Right cardiac atrium (tissue), 5 donors: ENCODE measurements at regions of chr14 and their contacts with region 1.

Region 1: DNA sequence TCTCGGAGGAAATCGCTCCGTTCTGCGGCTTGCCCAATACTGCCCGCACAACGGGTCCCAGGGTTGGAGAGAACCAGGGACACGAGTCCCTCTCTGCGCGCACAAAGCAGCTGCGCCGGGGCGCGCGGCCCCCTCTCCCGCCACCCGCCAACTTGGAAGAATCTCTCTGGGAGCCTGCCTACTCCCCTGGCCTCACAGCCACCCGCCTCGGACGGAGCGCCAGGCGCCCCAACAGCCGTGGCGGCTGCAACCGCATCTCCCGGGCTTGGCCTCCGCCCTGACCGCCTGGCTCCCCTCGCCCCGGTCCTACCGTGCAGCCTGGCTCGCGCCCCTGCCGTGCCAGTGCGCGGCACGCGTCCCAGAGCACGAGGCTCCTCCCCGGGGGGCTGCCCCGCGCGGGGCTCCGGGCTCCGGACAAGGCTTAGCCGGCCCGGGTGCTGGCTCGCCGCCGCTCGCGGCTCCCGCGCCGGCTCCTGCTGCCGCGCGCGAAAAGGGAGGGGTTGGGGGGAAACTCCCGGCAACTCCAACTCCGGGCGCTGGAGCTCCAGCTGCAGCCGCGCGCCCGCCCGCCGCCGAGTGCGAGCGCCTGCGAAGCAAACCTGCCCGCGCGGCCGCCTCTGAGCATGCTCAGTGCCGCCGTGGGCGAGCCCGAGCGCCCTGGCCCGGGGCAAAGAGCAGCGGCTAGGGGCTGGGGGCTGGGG is at the start of gene STXBP6:
- DNase-seq: peak; percentile 76 to 92 (median 92)
- ATAC-seq: peak; percentile 87 to 93
- H3K4me3 ChIP-seq: peak within 1 kb of the TSS; percentile 74
- H3K27ac ChIP-seq: peak within 1 kb of the TSS; percentile 84
- H3K4me1 ChIP-seq: peaks cover 2% of the 10 kb centered on the region
- H3K27me3 ChIP-seq: no peaks in the 10 kb centered on the region
- total RNA-seq, gene STXBP6: 18.8 to 31.7 (median 30.7) TPM

Region 2: DNA sequence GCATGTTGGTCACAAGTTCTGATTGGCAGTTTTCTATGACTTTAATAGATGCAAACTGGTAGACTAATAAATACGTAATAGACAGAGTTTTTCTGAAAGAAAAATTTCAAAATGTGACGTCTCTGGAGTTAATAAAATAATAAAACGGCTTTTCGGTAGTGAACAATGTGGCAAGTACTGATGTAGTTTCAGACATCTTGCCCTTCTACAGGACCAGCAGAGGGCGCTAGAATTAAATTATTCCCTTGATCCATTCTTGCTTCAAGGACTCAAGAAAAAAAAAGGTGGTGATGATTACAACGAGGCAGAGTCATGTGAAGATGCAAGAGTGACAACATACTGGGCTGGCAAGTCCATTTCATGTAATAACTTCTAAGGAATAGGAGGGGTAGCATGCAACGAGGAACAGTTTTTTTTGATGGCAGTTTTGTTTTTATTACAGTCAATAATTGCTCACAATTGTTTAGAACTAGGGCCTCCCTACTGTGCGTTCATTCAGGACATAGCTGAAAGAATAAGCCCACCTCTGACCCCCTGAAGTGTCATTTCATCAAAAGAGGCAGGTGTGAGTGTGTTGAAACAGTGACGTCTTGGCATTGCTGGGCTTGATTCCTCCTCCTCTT is 314.7 kb before region 1 on chr14:
- intact Hi-C with region 1: loop called in 1 of 4 experiments (anchors 10 kb)
- DNase-seq: peak in 1 of 3 donors; percentile 19
- ATAC-seq: peak; percentile 69 to 73
- H3K4me3 ChIP-seq: no peak overlapping the region
- H3K27ac ChIP-seq: no peak overlapping the region
- H3K4me1 ChIP-seq: no peaks in the 10 kb centered on the region
- H3K27me3 ChIP-seq: no peaks in the 10 kb centered on the region

Region 3: GRCh38 chr14:24806061-24806678 is 243.5 kb before region 1 on chr14:
- intact Hi-C with region 1: loop called (anchors 5 to 10 kb)
- DNase-seq: peak; percentile 60 to 86 (median 79)
- ATAC-seq: peak; percentile 59 to 61
- H3K4me3 ChIP-seq: no peak overlapping the region
- H3K27ac ChIP-seq: no peak overlapping the region
- H3K4me1 ChIP-seq: peaks cover 5% of the 10 kb centered on the region
- H3K27me3 ChIP-seq: no peaks in the 10 kb centered on the region

Region 4: GRCh38 chr14:24817212-24818057 is 232.3 kb before region 1 on chr14:
- intact Hi-C with region 1: loop called in 1 of 4 experiments (anchors 10 kb)
- DNase-seq: no peak
- ATAC-seq: peak; percentile 36 to 40
- H3K4me3 ChIP-seq: no peak overlapping the region
- H3K27ac ChIP-seq: peak overlapping the region; percentile 67
- H3K4me1 ChIP-seq: peaks cover 23% of the 10 kb centered on the region
- H3K27me3 ChIP-seq: no peaks in the 10 kb centered on the region

Region 5: DNA sequence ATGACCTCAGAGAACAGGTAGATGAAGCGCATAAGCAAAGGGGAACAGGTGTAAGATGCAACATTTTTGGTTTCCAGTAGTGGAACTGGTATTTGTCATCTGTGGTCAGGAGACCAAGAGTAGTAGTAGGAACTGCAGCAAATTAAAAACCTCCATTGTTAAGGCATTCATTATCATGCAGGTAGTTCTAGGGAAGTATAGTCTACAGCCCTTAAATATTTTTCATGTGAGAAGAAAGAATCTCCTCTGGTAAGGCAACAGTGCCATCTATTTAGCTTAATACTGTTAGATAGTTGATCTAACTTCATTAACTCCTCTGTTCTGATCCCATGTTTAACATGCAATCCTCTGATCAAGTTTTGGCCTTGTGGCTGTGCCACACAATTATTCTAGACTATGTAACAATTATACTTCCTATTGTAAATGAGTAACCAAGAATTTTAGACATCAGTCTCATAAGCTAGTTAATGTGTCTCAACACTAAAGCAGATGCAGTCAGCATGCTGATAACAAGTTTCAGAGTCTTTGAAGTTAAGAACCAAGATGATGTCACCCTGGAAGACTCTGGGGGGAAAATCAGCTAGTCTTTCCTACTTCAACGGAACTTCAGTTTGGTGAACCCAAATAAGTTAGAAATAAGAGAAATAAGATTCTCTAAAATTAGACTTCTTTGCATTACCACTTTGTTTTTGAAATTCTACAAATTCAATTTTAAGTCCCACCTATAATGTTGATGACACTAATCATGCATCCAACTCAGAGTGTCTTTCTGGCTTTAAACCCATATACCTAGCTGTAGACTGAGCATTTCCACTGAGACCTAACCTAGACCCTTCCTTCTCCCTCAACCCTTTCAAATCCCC is 70.6 kb before region 1 on chr14:
- intact Hi-C with region 1: loop called in 1 of 4 experiments (anchors 10 kb)
- DNase-seq: no peak
- ATAC-seq: no peak
- H3K4me3 ChIP-seq: no peak overlapping the region
- H3K27ac ChIP-seq: no peak overlapping the region
- H3K4me1 ChIP-seq: peaks cover 3% of the 10 kb centered on the region
- H3K27me3 ChIP-seq: no peaks in the 10 kb centered on the region

Region 6: GRCh38 chr14:25111061-25111601 is 61.4 kb after region 1 on chr14:
- intact Hi-C with region 1: loop called in 2 of 4 experiments (anchors 5 to 10 kb)
- DNase-seq: peak in 1 of 3 donors; percentile 24
- ATAC-seq: peak; percentile 98 to 99
- H3K4me3 ChIP-seq: peak overlapping the region; percentile 42
- H3K27ac ChIP-seq: peak overlapping the region; percentile 85
- H3K4me1 ChIP-seq: peaks cover 6% of the 10 kb centered on the region
- H3K27me3 ChIP-seq: no peaks in the 10 kb centered on the region

Region 7: GRCh38 chr14:25132732-25133422 is 83.2 kb after region 1 on chr14:
- intact Hi-C with region 1: loop called in 1 of 4 experiments (anchors 5 kb)
- DNase-seq: peak; percentile 63 to 78 (median 68)
- ATAC-seq: peak; percentile 94 to 96
- H3K4me3 ChIP-seq: no peak overlapping the region
- H3K27ac ChIP-seq: no peak overlapping the region
- H3K4me1 ChIP-seq: no peaks in the 10 kb centered on the region
- H3K27me3 ChIP-seq: no peaks in the 10 kb centered on the region